Naive thymus-derived CD4-positive, alpha-beta T cell (primary cell): ENCODE measurements at regions of chr7 and their contacts with region 1.

Region 1: GRCh38 chr7:151080522-151081169 is at the start of gene FASTK:
- DNase-seq: peak; percentile 79 to 89 (median 87)
- ATAC-seq: peak; percentile 85
- H3K4me3 ChIP-seq: peak within 1 kb of the TSS; percentile 86
- H3K4me3 Mint-ChIP-seq: peak within 1 kb of the TSS; percentile 87 to 97 (median 88)
- H3K27ac ChIP-seq: peak within 1 kb of the TSS; percentile 93
- H3K27ac Mint-ChIP-seq: peak within 1 kb of the TSS; percentile 72 to 92 (median 88)
- H3K4me1 ChIP-seq: peaks cover 41 to 44% of the 10 kb centered on the region in 2 donors
- H3K4me1 Mint-ChIP-seq: peaks cover 21 to 52% (median 39%) of the 10 kb centered on the region in 7 donors
- H3K27me3 ChIP-seq: no peaks in the 10 kb centered on the region
- H3K27me3 Mint-ChIP-seq: peaks cover 0 to 12% (median 0%) of the 10 kb centered on the region in 5 donors
- total RNA-seq, gene FASTK: 94.1 to 136 (median 101) TPM

Region 2: GRCh38 chr7:149147072-149147751 is 1933.4 kb before region 1 on chr7 and contains the start of gene ZNF398:
- CTCF ChIA-PET with region 1: no interaction called
- POLR2A ChIA-PET with region 1: no interaction called
- intact Hi-C with region 1: loop called in 1 of 2 experiments (anchors 10 kb)
- DNase-seq: peak; percentile 77 to 91 (median 85)
- ATAC-seq: peak; percentile 92
- H3K4me3 ChIP-seq: peak within 1 kb of the TSS; percentile 98
- H3K4me3 Mint-ChIP-seq: peak within 1 kb of the TSS; percentile 88 to 98 (median 93)
- H3K27ac ChIP-seq: peak within 1 kb of the TSS; percentile 86
- H3K27ac Mint-ChIP-seq: peak within 1 kb of the TSS; percentile 90 to 98 (median 95)
- H3K4me1 ChIP-seq: peaks cover 8 to 23% of the 10 kb centered on the region in 2 donors
- H3K4me1 Mint-ChIP-seq: peaks cover 24 to 52% (median 42%) of the 10 kb centered on the region in 7 donors
- H3K27me3 ChIP-seq: no peaks in the 10 kb centered on the region
- H3K27me3 Mint-ChIP-seq: no peaks in the 10 kb centered on the region
- total RNA-seq, gene ZNF398: 14.6 to 27.9 (median 16.9) TPM

Region 3: DNA sequence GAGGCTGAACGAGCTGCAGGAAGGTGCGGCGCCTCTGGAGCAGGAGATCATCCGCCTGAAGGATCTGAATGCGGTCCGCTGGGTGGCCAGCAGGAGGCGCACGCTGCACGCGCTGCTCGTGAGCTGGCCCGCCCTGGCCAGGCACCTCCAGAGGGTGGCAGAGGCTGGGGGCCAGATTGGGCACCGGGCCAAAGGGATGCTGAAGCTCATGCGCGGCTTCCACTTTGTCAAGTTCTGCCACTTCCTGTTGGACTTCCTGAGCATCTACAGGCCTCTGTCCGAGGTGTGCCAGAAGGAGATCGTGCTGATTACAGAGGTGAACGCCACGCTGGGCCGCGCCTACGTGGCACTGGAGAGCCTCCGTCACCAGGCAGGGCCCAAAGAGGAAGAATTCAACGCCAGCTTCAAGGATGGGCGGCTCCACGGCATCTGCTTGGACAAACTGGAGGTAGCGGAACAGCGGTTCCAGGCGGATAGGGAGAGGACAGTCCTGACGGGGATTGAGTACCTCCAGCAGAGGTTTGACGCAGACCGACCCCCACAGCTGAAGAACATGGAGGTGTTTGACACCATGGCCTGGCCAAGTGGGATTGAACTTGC is 1219.1 kb before region 1 on chr7:
- CTCF ChIA-PET with region 1: no interaction called
- POLR2A ChIA-PET with region 1: no interaction called
- intact Hi-C with region 1: loop called in 1 of 2 experiments (anchors 5 kb)
- DNase-seq: no peak
- ATAC-seq: no peak
- H3K4me3 ChIP-seq: no peak overlapping the region
- H3K4me3 Mint-ChIP-seq: peak overlapping the region in 1 of 10 donors; percentile 6
- H3K27ac ChIP-seq: no peak overlapping the region
- H3K27ac Mint-ChIP-seq: peak overlapping the region in 6 of 9 donors; percentile 10 to 83 (median 50)
- H3K4me1 ChIP-seq: peaks cover 29 to 69% of the 10 kb centered on the region in 2 donors
- H3K4me1 Mint-ChIP-seq: peaks cover 36 to 93% (median 83%) of the 10 kb centered on the region in 7 donors
- H3K27me3 ChIP-seq: no peaks in the 10 kb centered on the region
- H3K27me3 Mint-ChIP-seq: no peaks in the 10 kb centered on the region

Region 4: GRCh38 chr7:150962553-150963399 is 117.9 kb before region 1 on chr7:
- CTCF ChIA-PET with region 1: no interaction called
- POLR2A ChIA-PET with region 1: no interaction called
- intact Hi-C with region 1: loop called in 1 of 2 experiments (anchors 1 kb)
- DNase-seq: peak; percentile 31 to 69 (median 53)
- ATAC-seq: peak; percentile 82
- H3K4me3 ChIP-seq: no peak overlapping the region
- H3K4me3 Mint-ChIP-seq: peak overlapping the region in 1 of 10 donors; percentile 51
- H3K27ac ChIP-seq: no peak overlapping the region
- H3K27ac Mint-ChIP-seq: no peak overlapping the region
- H3K4me1 ChIP-seq: no peaks in the 10 kb centered on the region
- H3K4me1 Mint-ChIP-seq: peaks cover 9 to 41% (median 24%) of the 10 kb centered on the region in 7 donors
- H3K27me3 ChIP-seq: no peaks in the 10 kb centered on the region
- H3K27me3 Mint-ChIP-seq: peaks cover 15 to 36% (median 20%) of the 10 kb centered on the region in 5 donors

Region 5: GRCh38 chr7:151028131-151028947 is 52.3 kb before region 1 on chr7 and contains the start of gene ABCB8:
- CTCF ChIA-PET with region 1: no interaction called
- POLR2A ChIA-PET with region 1: interaction called, 10 read pairs
- intact Hi-C with region 1: loop called (anchors 1 kb)
- DNase-seq: peak; percentile 89 to 100 (median 99)
- ATAC-seq: peak; percentile 94
- H3K4me3 ChIP-seq: peak within 1 kb of the TSS; percentile 78
- H3K4me3 Mint-ChIP-seq: peak within 1 kb of the TSS; percentile 83 to 98 (median 92)
- H3K27ac ChIP-seq: peak within 1 kb of the TSS; percentile 94
- H3K27ac Mint-ChIP-seq: peak within 1 kb of the TSS; percentile 95 to 100 (median 99)
- H3K4me1 ChIP-seq: peaks cover 6% of the 10 kb centered on the region in 2 donors
- H3K4me1 Mint-ChIP-seq: peaks cover 20 to 40% (median 29%) of the 10 kb centered on the region in 7 donors
- H3K27me3 ChIP-seq: no peaks in the 10 kb centered on the region
- H3K27me3 Mint-ChIP-seq: peaks cover 0 to 6% (median 0%) of the 10 kb centered on the region in 5 donors
- total RNA-seq, gene ABCB8: 59.7 to 88.0 (median 76.6) TPM

Region 6: GRCh38 chr7:151410405-151411390 is 330.1 kb after region 1 on chr7:
- CTCF ChIA-PET with region 1: no interaction called
- POLR2A ChIA-PET with region 1: no interaction called
- intact Hi-C with region 1: no loop called
- DNase-seq: no peak
- ATAC-seq: no peak
- H3K4me3 ChIP-seq: peak overlapping the region; percentile 51
- H3K4me3 Mint-ChIP-seq: peak overlapping the region in 9 of 10 donors; percentile 18 to 82 (median 66)
- H3K27ac ChIP-seq: no peak overlapping the region
- H3K27ac Mint-ChIP-seq: no peak overlapping the region
- H3K4me1 ChIP-seq: peaks cover 11 to 24% of the 10 kb centered on the region in 2 donors
- H3K4me1 Mint-ChIP-seq: peaks cover 11 to 24% (median 19%) of the 10 kb centered on the region in 7 donors
- H3K27me3 ChIP-seq: peaks cover 0 to 8% of the 10 kb centered on the region in 2 donors
- H3K27me3 Mint-ChIP-seq: peaks cover 19 to 76% (median 27%) of the 10 kb centered on the region in 5 donors

Region 7: DNA sequence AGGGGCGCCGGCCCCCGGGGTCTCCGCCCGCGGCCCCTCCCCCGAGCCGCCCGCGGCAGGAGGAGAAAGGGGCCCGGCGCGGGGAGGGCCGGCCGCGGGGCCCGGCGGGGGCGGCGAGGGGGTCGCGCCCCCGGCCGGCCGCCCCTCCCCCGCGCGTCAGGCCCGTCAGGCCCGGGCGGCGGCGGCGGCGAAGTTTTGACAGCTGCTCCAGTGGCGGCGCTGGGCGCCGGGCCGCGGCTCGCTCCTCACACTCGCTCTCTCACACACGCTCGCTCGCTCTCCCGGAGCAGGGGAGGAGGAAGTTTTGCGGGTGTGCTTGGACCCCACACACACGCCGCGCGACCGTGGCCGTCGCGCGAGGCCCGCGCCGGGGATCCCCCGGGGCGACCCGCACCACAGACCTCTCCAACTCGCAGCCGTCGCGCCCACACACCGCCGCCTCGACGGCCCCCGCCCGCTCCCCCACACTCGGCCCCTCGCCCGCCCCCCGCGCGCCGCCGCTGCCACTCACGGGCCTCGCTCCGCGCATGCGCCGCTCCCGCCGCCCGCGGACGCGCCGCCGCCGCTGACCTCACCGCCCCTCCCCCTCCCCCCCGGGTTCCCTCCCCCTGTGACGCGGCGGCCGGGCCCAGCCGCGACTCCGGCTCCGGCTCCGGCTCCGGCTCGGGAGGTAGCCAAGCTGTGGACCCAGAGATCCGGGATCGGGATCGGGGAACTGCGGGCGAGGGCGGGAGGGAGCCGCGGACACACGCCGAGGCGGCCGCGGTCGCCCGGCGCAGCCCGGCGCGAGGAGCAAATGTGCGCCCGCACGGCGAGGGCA is 1355.7 kb after region 1 on chr7:
- CTCF ChIA-PET with region 1: no interaction called
- POLR2A ChIA-PET with region 1: no interaction called
- intact Hi-C with region 1: loop called in 1 of 2 experiments (anchors 10 kb)
- DNase-seq: peak; percentile 79 to 92 (median 87)
- ATAC-seq: peak; percentile 87
- H3K4me3 ChIP-seq: peak overlapping the region; percentile 75
- H3K4me3 Mint-ChIP-seq: peak overlapping the region; percentile 79 to 93 (median 88)
- H3K27ac ChIP-seq: peak overlapping the region; percentile 97
- H3K27ac Mint-ChIP-seq: peak overlapping the region; percentile 85 to 97 (median 93)
- H3K4me1 ChIP-seq: peaks cover 5 to 7% of the 10 kb centered on the region in 2 donors
- H3K4me1 Mint-ChIP-seq: peaks cover 15 to 35% (median 24%) of the 10 kb centered on the region in 7 donors
- H3K27me3 ChIP-seq: no peaks in the 10 kb centered on the region
- H3K27me3 Mint-ChIP-seq: no peaks in the 10 kb centered on the region